Heart left ventricle (tissue), 16 donors: ENCODE measurements at regions of chr1 and their contacts with region 1.

Region 1: DNA sequence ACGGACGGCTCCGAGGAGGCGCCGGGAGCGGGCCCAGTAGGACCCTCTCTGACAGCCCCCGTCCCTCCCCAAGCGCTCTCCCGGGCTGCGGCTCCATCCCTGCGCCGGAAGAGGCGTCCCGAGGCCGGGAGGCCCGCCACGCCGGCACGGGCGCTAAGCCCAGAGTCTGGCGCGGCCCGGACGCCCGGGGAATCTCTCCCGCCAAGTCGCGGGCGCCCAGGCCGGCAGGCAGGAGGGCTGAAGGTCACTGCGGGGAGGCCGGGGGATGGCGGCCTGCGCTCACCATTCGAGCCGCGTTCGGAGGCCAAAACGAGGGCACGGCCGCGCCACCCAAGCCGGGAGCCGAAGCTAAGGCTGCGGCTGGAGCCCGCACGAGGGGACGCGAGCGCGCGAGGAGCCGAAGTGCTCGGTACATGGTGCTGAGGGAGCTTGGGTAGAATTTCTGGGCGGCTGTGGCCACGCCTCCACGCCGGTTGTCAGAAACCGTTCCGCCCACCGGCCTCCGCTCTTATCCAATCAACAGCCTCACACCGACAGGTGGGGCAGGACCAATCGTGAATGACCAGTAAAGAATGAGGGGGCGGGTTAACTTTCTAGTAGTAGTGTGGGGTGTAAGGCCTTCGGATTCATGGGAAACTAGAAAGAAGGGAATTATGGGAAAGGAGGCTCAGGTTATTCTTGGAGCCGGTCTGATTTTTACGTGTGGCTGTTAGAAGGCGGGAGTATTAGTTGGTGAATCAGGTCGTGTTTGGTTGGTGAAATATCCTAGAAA is at the start of gene FH:
- DNase-seq: peak; percentile 96 to 97 (median 97)
- ATAC-seq: peak; percentile 99 to 100 (median 100)
- H3K4me3 ChIP-seq: peak within 1 kb of the TSS; percentile 79 to 97 (median 90)
- H3K27ac ChIP-seq: peak within 1 kb of the TSS; percentile 84 to 97 (median 92)
- H3K4me1 ChIP-seq: peaks cover 0 to 27% (median 13%) of the 10 kb centered on the region in 12 donors
- H3K27me3 ChIP-seq: peaks cover 0 to 26% (median 0%) of the 10 kb centered on the region in 9 donors
- CTCF ChIP-seq: peak in 1 of 12 donors; percentile 14
- POLR2A ChIP-seq: peak in 1 of 2 donors; percentile 90
- total RNA-seq, gene FH: 153 to 279 (median 209) TPM

Region 2: GRCh38 chr1:241600496-241600901 is 81.0 kb after region 1 on chr1:
- intact Hi-C with region 1: no loop called
- DNase-seq: no peak
- ATAC-seq: no peak
- H3K4me3 ChIP-seq: no peak overlapping the region
- H3K27ac ChIP-seq: no peak overlapping the region
- H3K4me1 ChIP-seq: peaks cover 0 to 24% (median 0%) of the 10 kb centered on the region in 12 donors
- H3K27me3 ChIP-seq: no peaks in the 10 kb centered on the region
- CTCF ChIP-seq: no peak
- POLR2A ChIP-seq: no peak

Region 3: GRCh38 chr1:241640029-241640818 is 120.7 kb after region 1 on chr1 and contains the starts of genes CHML and OPN3:
- intact Hi-C with region 1: loop called in 1 of 10 experiments (anchors 5 kb)
- DNase-seq: peak; percentile 95 to 98 (median 96)
- ATAC-seq: peak; percentile 99 to 100 (median 100)
- H3K4me3 ChIP-seq: peak within 1 kb of the TSS; percentile 73 to 98 (median 90)
- H3K27ac ChIP-seq: peak within 1 kb of the TSS; percentile 17 to 86 (median 78)
- H3K4me1 ChIP-seq: peaks cover 0 to 35% (median 10%) of the 10 kb centered on the region in 12 donors
- H3K27me3 ChIP-seq: no peaks in the 10 kb centered on the region
- CTCF ChIP-seq: no peak
- POLR2A ChIP-seq: peak; percentile 15 to 72
- total RNA-seq, gene CHML: 3.9 to 9.8 (median 6.6) TPM
- total RNA-seq, gene OPN3: 3.5 to 13.6 (median 6.2) TPM

Region 4: DNA sequence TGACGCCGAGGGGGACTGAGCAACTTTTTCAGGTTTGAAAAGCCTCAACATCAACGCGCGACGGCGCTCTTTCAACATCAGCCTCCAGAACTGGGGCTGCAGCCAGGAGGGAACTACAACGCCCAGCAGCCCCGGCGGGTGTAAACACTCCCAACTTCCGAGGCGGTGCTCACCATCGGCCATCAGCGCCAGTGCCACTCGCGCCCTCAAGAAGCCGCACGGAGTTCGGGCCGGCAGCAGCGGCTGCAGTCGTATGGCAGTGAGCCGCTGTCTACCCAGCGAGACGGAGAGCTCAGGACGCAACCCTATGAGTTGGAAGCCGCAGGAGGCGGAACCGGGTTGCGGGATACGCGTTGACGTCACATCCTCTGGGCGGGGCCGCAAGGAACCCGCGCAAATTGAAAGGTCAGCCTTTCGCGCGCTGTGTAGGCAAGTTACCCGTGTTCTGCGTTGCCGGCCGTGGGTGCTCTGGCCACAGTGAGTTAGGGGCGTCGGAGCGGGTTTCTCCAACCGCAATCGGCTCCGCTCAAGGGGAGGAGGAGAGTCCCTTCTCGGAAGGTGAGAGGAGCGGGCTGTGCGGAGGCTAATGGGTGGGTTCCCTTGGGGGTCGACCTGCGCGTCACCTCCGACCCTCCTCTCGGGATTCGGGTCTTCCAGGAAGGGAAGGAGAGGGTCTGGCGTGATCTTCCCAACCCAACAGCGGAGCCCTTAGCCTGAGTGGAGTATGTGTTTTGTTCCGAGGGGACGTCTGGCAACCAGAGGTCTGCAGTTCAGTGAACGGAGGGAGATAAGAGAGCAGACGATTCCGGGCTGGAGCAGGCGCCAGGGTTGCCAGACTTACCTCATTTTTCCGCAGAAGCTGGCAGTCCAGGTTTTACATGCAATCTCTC is 328.5 kb after region 1 on chr1 and contains the start of gene EXO1:
- intact Hi-C with region 1: loop called in 1 of 10 experiments (anchors 10 kb)
- DNase-seq: peak; percentile 87 to 92 (median 89)
- ATAC-seq: peak; percentile 97 to 99 (median 99)
- H3K4me3 ChIP-seq: peak within 1 kb of the TSS; percentile 25 to 97 (median 84)
- H3K27ac ChIP-seq: peak within 1 kb of the TSS; percentile 89 to 100 (median 96)
- H3K4me1 ChIP-seq: peaks cover 0 to 14% (median 10%) of the 10 kb centered on the region in 12 donors
- H3K27me3 ChIP-seq: no peaks in the 10 kb centered on the region
- CTCF ChIP-seq: peak in 9 of 12 donors; percentile 14 to 56 (median 41)
- POLR2A ChIP-seq: peak in 1 of 2 donors; percentile 41
- total RNA-seq, gene EXO1: 0.15 to 4.1 (median 0.81) TPM in 5 of 9 donors, not detected in the others

Region 5: DNA sequence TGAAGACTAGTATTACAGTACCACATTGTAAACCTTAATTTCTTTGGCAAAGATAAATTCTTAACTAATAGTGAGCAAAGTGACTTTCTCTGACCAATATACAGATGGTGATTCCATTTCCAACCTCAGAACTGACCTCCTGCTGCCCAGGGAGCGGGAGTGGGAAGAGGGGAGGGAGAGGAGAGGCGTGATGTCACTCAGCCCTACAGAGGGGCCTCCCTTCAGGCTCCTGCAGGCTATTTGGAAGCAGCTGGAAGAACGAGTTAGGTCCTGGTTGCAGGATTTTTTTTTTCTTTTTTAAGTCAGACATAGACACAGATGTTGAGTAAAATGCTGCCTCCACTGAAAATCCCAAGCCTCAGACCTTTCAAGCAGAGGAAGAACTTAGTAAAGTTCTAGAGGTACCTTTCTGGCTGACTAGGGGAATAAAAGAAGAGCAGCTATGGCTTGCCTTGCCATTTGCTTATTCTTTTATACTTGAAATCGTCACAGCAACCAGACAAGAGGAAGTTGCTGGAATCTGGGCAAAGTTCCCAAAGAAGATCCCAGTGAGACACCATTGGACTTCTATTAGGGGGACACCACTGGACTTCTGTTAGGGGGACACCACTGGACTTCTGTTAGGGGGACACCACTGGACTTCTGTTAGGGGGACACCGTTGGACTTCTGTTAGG is 383.0 kb after region 1 on chr1:
- intact Hi-C with region 1: no loop called
- DNase-seq: no peak
- ATAC-seq: no peak
- H3K4me3 ChIP-seq: no peak overlapping the region
- H3K27ac ChIP-seq: no peak overlapping the region
- H3K4me1 ChIP-seq: no peaks in the 10 kb centered on the region
- H3K27me3 ChIP-seq: no peaks in the 10 kb centered on the region
- CTCF ChIP-seq: no peak
- POLR2A ChIP-seq: no peak

Region 6: DNA sequence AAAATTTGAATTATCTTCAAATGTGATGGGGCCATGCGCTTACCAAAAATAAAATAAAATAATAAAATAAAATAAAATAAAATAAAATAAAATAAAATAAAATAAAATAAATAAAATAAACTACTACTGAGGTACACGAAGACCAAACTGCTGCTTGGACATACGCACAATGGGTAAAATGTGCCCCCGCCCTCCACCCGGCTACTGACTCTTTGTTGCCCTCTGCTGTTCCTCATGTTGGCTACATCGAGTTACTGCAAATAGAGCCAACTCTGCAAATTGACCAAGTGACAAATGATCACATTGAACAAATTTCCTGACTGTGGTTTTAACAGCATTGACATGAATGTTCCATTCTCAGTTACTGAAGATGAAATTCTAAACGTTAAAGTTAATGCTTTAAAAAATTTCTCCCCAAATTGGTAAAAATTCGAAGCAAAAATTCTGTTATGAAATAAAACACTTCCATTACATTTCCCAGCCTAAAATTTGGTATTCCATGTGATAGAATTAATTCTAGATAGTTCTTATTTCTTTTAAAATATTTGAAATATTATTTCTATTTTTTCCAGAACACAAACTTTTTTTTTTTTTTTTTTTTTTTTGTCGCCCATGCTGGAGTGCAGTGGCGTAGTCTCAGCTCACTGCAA is 498.2 kb after region 1 on chr1:
- intact Hi-C with region 1: loop called in 1 of 10 experiments (anchors 10 kb)
- DNase-seq: peak in 2 of 5 donors; percentile 22 to 24
- ATAC-seq: peak in 1 of 4 donors; percentile 59
- H3K4me3 ChIP-seq: no peak overlapping the region
- H3K27ac ChIP-seq: no peak overlapping the region
- H3K4me1 ChIP-seq: no peaks in the 10 kb centered on the region
- H3K27me3 ChIP-seq: no peaks in the 10 kb centered on the region
- CTCF ChIP-seq: peak; percentile 45 to 72 (median 60)
- POLR2A ChIP-seq: no peak